CD4-positive, alpha-beta memory T cell (primary cell): ENCODE measurements at regions of chr6 and their contacts with region 1.

Region 1: DNA sequence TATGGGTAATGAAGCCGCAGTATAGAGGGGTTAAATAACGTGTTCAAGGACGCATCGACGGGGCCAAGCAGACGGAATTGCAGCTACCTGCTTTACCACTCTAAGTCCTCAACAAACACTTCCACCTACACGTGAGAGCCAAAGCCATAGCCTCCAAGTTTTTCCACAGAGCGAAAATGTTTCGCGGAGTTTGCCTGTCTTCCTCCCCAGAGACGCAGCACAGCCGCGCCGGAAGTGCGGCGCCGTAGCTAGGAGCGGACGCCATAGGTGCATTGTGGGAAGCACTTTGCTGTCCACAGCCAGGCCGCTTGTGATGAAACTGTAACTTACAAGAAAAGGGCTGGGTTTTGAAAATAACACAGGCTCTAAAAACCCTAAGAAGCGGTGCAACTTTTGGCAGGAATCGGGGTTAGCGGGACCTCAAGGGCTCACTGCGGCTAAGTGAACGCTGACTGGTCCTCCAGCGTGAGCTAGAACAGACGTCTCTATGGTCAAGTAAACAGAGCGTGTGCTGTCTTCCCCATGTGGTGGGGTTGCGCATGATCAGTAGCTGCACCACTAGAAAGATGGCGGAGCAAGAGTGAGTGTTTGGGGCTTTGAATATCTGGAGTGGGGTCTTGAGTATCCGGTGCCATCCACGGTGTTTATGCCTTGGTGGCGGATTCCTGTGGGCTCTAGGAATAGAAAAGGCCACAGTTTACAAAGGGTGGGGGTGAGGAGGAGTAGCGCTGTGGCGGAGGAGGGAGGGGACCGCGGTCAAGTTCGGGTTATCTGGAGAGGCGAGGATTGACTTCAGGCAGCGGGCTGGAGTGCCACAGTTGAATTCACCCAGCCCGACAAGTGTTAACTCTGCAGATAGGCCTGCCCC is at the start of gene RPL7L1:
- DNase-seq: peak; percentile 88 to 93 (median 91)
- H3K4me3 ChIP-seq: peak within 1 kb of the TSS; percentile 77 to 84
- H3K4me3 Mint-ChIP-seq: peak within 1 kb of the TSS; percentile 94 to 99 (median 96)
- H3K27ac ChIP-seq: peak within 1 kb of the TSS; percentile 93
- H3K27ac Mint-ChIP-seq: peak within 1 kb of the TSS; percentile 97 to 100 (median 99)
- H3K4me1 ChIP-seq: peaks cover 23% of the 10 kb centered on the region
- H3K4me1 Mint-ChIP-seq: peaks cover 7 to 39% (median 25%) of the 10 kb centered on the region in 4 donors
- H3K27me3 ChIP-seq: no peaks in the 10 kb centered on the region
- H3K27me3 Mint-ChIP-seq: no peaks in the 10 kb centered on the region
- total RNA-seq, gene RPL7L1: 89.2 to 89.8 TPM

Region 2: GRCh38 chr6:42217519-42218367 is 661.9 kb before region 1 on chr6 and contains the start of gene MRPS10:
- CTCF ChIA-PET with region 1: no interaction called
- POLR2A ChIA-PET with region 1: interaction called, 3 read pairs
- intact Hi-C with region 1: loop called (anchors 1 kb)
- DNase-seq: peak; percentile 88 to 93 (median 90)
- H3K4me3 ChIP-seq: peak within 1 kb of the TSS; percentile 71 to 72
- H3K4me3 Mint-ChIP-seq: peak within 1 kb of the TSS; percentile 95 to 99 (median 98)
- H3K27ac ChIP-seq: peak within 1 kb of the TSS; percentile 81
- H3K27ac Mint-ChIP-seq: peak within 1 kb of the TSS; percentile 90 to 98 (median 97)
- H3K4me1 ChIP-seq: peaks cover 29% of the 10 kb centered on the region
- H3K4me1 Mint-ChIP-seq: peaks cover 12 to 28% (median 20%) of the 10 kb centered on the region in 4 donors
- H3K27me3 ChIP-seq: no peaks in the 10 kb centered on the region
- H3K27me3 Mint-ChIP-seq: no peaks in the 10 kb centered on the region
- total RNA-seq, gene MRPS10: 22.6 to 25.1 TPM

Region 3: DNA sequence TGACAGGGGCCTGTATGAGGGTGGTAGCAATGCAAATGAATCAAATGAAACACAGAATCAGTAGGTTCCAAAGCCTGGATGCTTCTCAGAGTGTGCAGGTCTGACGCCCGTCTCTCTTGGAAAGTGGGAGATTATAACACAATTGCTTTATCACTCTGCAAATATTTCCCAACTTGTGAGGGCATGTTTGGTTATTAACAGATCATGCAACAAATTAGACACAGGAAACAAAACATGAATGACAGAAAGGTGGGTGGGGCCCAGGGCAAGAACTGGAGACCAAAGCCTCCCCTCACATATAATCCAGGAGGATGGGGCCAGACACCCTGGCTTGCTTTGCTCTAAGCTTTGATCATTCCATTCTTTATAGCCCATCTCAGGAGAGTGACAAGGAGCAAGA is 553.4 kb before region 1 on chr6:
- CTCF ChIA-PET with region 1: no interaction called
- POLR2A ChIA-PET with region 1: no interaction called
- intact Hi-C with region 1: no loop called
- DNase-seq: no peak
- H3K4me3 ChIP-seq: no peak overlapping the region
- H3K4me3 Mint-ChIP-seq: no peak overlapping the region
- H3K27ac ChIP-seq: no peak overlapping the region
- H3K27ac Mint-ChIP-seq: peak overlapping the region in 2 of 7 donors; percentile 15 to 66
- H3K4me1 ChIP-seq: peaks cover 20% of the 10 kb centered on the region
- H3K4me1 Mint-ChIP-seq: peaks cover 41 to 63% (median 49%) of the 10 kb centered on the region in 4 donors
- H3K27me3 ChIP-seq: no peaks in the 10 kb centered on the region
- H3K27me3 Mint-ChIP-seq: no peaks in the 10 kb centered on the region

Region 4: GRCh38 chr6:42661540-42662153 is 218.0 kb before region 1 on chr6:
- CTCF ChIA-PET with region 1: interaction called, 111 read pairs
- POLR2A ChIA-PET with region 1: interaction called, 30 read pairs
- intact Hi-C with region 1: loop called (anchors 1 kb)
- DNase-seq: peak; percentile 80 to 84 (median 84)
- H3K4me3 ChIP-seq: no peak overlapping the region
- H3K4me3 Mint-ChIP-seq: no peak overlapping the region
- H3K27ac ChIP-seq: no peak overlapping the region
- H3K27ac Mint-ChIP-seq: peak overlapping the region in 4 of 7 donors; percentile 0 to 15 (median 2)
- H3K4me1 ChIP-seq: no peaks in the 10 kb centered on the region
- H3K4me1 Mint-ChIP-seq: peaks cover 0 to 2% (median 0%) of the 10 kb centered on the region in 4 donors
- H3K27me3 ChIP-seq: no peaks in the 10 kb centered on the region
- H3K27me3 Mint-ChIP-seq: no peaks in the 10 kb centered on the region

Region 5: GRCh38 chr6:42771741-42772100 is 107.9 kb before region 1 on chr6:
- CTCF ChIA-PET with region 1: no interaction called
- POLR2A ChIA-PET with region 1: interaction called, 46 read pairs
- intact Hi-C with region 1: loop called (anchors 1 kb)
- DNase-seq: peak in 4 of 5 donors; percentile 75 to 79 (median 77)
- H3K4me3 ChIP-seq: peak overlapping the region; percentile 7 to 11
- H3K4me3 Mint-ChIP-seq: peak overlapping the region; percentile 72 to 90 (median 84)
- H3K27ac ChIP-seq: peak overlapping the region; percentile 89
- H3K27ac Mint-ChIP-seq: peak overlapping the region; percentile 97 to 100 (median 100)
- H3K4me1 ChIP-seq: peaks cover 77% of the 10 kb centered on the region
- H3K4me1 Mint-ChIP-seq: peaks cover 54 to 88% (median 70%) of the 10 kb centered on the region in 4 donors
- H3K27me3 ChIP-seq: no peaks in the 10 kb centered on the region
- H3K27me3 Mint-ChIP-seq: no peaks in the 10 kb centered on the region

Region 6: GRCh38 chr6:42901536-42901957 is 21.9 kb after region 1 on chr6:
- CTCF ChIA-PET with region 1: interaction called, 20 read pairs
- POLR2A ChIA-PET with region 1: no interaction called
- intact Hi-C with region 1: loop called (anchors 2 kb)
- DNase-seq: peak; percentile 71 to 80 (median 77)
- H3K4me3 ChIP-seq: no peak overlapping the region
- H3K4me3 Mint-ChIP-seq: no peak overlapping the region
- H3K27ac ChIP-seq: no peak overlapping the region
- H3K27ac Mint-ChIP-seq: peak overlapping the region in 1 of 7 donors; percentile 4
- H3K4me1 ChIP-seq: peaks cover 8% of the 10 kb centered on the region
- H3K4me1 Mint-ChIP-seq: peaks cover 4 to 11% (median 6%) of the 10 kb centered on the region in 4 donors
- H3K27me3 ChIP-seq: no peaks in the 10 kb centered on the region
- H3K27me3 Mint-ChIP-seq: no peaks in the 10 kb centered on the region